Cardiac septum (tissue), 1 donor: ENCODE measurements at regions of chr3 and their contacts with region 1.

Region 1: GRCh38 chr3:120604784-120605183 is 8.6 kb downstream of the NDUFB4 start:
- DNase-seq: no peak

Region 2: GRCh38 chr3:120645083-120645845 is 40.5 kb after region 1 on chr3:
- intact Hi-C with region 1: loop called (anchors 5 kb)
- DNase-seq: no peak